Activated naive CD8-positive, alpha-beta T cell treated with anti-CD3 and anti-CD28 coated beads, Interleukin-2, amount 10 ng/mL, durations not matched to agents 7 days and 5 days (primary cell): ENCODE measurements at regions of chr17 and their contacts with region 1.

Region 1: GRCh38 chr17:75872434-75873351 is 5.7 kb downstream of the TRIM47 start:
- DNase-seq: peak; percentile 66
- ATAC-seq: peak; percentile 51
- H3K4me3 Mint-ChIP-seq: peak overlapping the region; percentile 49
- H3K27ac Mint-ChIP-seq: peak overlapping the region; percentile 89
- H3K4me1 Mint-ChIP-seq: peaks cover 25% of the 10 kb centered on the region
- H3K27me3 Mint-ChIP-seq: no peaks in the 10 kb centered on the region

Region 2: GRCh38 chr17:75896415-75897159 is 23.9 kb after region 1 on chr17 and contains the start of gene TRIM65:
- POLR2A ChIA-PET with region 1: interaction called, 68 read pairs
- DNase-seq: peak; percentile 89
- ATAC-seq: peak; percentile 87
- H3K4me3 Mint-ChIP-seq: peak within 1 kb of the TSS; percentile 87
- H3K27ac Mint-ChIP-seq: peak within 1 kb of the TSS; percentile 86
- H3K4me1 Mint-ChIP-seq: peaks cover 18% of the 10 kb centered on the region
- H3K27me3 Mint-ChIP-seq: no peaks in the 10 kb centered on the region
- total RNA-seq, gene TRIM65: 35.3 to 36.3 TPM